Tibial artery (tissue), 4 donors: ENCODE measurements at regions of chr1 and their contacts with region 1.

Region 1: DNA sequence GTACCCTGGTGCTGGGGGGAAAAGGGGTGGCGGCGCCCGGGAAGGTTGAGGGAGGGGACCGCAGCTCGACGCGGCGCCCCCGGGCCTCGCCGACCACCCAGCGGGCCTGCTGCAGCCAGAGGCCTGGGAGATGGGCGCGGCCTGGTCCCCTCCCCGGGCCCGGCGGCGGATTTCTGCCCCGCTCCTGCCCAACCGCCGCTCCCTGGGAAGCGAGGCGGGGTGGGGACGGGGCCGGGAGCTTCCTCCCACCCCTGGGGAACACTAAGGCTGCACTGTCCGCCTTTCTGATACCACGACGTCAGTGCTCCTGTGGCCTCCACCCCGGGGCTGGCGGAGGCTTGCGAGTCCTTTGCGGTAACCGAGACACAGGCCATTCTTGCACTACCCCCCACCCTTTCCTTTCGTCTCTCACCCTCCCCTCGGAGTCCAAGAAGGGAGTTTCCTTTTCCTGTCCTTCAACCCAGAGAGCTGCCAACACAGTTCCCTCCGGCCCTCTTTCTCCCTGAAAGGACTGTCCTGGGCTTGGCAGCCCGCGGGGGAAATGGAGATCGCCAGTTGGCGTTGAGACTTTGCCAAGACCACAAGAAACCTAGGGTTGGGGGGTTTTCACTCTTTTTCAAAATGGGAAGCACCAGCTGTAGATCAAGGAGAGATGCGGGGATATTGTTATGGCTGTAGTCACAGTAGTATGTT is 742 bp downstream of the SH3GLB1 start:
- DNase-seq: peak; percentile 57 to 82
- H3K4me3 ChIP-seq: peak overlapping the region; percentile 85 to 91
- H3K27ac ChIP-seq: peak overlapping the region; percentile 98 to 99
- H3K4me1 ChIP-seq: peaks cover 0 to 44% (median 12%) of the 10 kb centered on the region in 4 donors
- H3K27me3 ChIP-seq: no peaks in the 10 kb centered on the region
- CTCF ChIP-seq: no peak

Region 2: DNA sequence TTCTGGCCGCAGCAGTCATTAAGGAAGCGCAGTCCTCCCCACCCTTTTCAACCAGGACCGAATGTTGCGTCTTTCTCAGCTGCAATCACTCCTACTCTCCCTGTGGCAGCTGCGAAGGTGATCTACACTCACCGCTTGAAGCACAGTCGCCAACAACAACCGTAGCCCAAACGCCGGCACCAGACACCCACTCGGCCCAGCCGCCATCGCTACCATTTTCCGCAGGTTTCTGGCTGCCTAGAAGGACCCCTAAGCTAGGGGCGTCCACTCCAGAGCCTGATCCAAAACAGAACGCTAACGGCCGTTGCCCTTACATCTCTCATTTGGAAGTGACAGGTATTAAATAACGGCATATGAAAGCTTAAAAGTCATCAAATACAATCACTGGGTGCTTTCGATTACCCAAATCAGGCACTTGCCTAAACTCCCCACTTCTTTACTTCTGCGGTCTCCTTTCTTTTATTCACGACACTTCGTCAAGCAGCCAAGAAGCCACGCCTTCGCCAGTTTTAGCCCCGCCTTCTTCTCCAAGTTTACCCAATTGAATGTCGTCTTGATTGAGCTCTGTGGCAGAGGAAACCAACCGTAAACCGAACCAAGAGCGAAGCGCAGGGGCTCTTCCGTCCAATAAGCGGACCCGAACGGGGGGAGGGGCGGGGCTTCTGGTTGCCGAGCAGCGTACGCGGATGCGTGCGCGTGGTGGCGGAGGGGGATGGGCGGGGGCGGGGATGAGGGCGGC is 208.9 kb after region 1 on chr1 and contains the start of gene SELENOF:
- intact Hi-C with region 1: loop called (anchors 5 kb)
- DNase-seq: peak; percentile 99 to 100
- H3K4me3 ChIP-seq: peak within 1 kb of the TSS; percentile 79 to 92
- H3K27ac ChIP-seq: peak within 1 kb of the TSS; percentile 87 to 92
- H3K4me1 ChIP-seq: peaks cover 0 to 31% (median 24%) of the 10 kb centered on the region in 4 donors
- H3K27me3 ChIP-seq: no peaks in the 10 kb centered on the region
- CTCF ChIP-seq: peak in 1 of 2 experiments; percentile 16